ENCODE measurements at regions of chr6 and their contacts with region 1.

Region 1: GRCh38 chr6:28399350-28400121 is at the start of gene ZSCAN12:
- DNase-seq: peak; percentile 79
- ATAC-seq: peak; percentile 89
- H3K4me3 Mint-ChIP-seq: peak within 1 kb of the TSS; percentile 97
- H3K27ac Mint-ChIP-seq: peak within 1 kb of the TSS; percentile 95
- H3K4me1 Mint-ChIP-seq: peaks cover 42% of the 10 kb centered on the region
- H3K27me3 Mint-ChIP-seq: peaks cover 34% of the 10 kb centered on the region
- CTCF ChIP-seq: no peak
- total RNA-seq, gene ZSCAN12: 12.8 and 13.0 TPM in 2 replicates

Region 2: DNA sequence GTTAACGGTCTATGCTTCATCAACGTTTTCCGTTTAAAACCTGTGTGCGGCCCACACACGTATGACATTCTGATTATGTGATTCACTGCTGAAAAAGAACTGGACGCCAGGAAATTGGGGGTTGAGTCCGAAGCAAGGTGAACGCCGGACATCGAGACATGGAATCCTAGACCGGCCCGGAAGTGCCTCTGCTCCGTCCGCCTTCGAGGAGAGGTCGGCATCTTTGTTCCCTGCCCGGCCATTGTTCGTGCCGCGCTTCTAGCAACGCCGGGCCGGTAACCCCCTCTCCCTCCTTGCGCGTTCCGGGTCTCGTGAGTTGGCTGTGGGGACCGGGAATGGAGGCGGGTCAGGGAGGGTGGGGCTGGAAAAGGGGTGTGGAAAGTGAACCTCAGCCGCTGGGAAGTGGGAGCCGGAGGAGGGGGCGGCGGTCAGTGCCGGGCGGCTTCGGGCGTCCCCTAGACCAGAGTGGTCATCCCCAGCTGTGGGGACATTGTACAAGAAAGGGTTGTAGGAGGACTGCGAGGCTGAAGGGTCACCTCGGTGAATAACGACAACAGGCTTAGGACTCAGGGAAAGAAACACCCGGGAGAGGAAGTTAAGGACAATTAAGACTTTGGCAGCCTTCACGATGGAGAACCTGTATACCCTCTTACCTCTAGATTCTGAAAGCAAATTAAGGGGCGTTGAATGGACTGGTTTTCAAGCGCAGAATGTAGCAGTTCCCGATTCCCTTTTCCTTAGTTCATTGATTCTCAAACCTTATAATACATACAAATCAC is 174.3 kb before region 1 on chr6 and contains the start of gene ZSCAN9:
- CTCF ChIA-PET with region 1: no interaction called
- POLR2A ChIA-PET with region 1: no interaction called
- intact Hi-C with region 1: loop called (anchors 2 kb)
- DNase-seq: peak; percentile 52
- ATAC-seq: peak; percentile 89
- H3K4me3 Mint-ChIP-seq: peak within 1 kb of the TSS; percentile 88
- H3K27ac Mint-ChIP-seq: peak within 1 kb of the TSS; percentile 68
- H3K4me1 Mint-ChIP-seq: peaks cover 21% of the 10 kb centered on the region
- H3K27me3 Mint-ChIP-seq: peaks cover 21% of the 10 kb centered on the region
- CTCF ChIP-seq: no peak
- total RNA-seq, gene ZSCAN9: 25.9 and 30.3 TPM in 2 replicates

Region 3: GRCh38 chr6:28335564-28336283 is 63.8 kb before region 1 on chr6 and contains the start of gene ZSCAN31:
- CTCF ChIA-PET with region 1: no interaction called
- POLR2A ChIA-PET with region 1: interaction called, 3 read pairs
- intact Hi-C with region 1: loop called (anchors 5 kb)
- DNase-seq: peak; percentile 61
- ATAC-seq: peak; percentile 93
- H3K4me3 Mint-ChIP-seq: no peak within 1 kb of the TSS
- H3K27ac Mint-ChIP-seq: no peak within 1 kb of the TSS
- H3K4me1 Mint-ChIP-seq: no peaks in the 10 kb centered on the region
- H3K27me3 Mint-ChIP-seq: no peaks in the 10 kb centered on the region
- CTCF ChIP-seq: no peak
- total RNA-seq, gene ZSCAN31: 1.0 and 3.6 TPM in 2 replicates

Region 4: DNA sequence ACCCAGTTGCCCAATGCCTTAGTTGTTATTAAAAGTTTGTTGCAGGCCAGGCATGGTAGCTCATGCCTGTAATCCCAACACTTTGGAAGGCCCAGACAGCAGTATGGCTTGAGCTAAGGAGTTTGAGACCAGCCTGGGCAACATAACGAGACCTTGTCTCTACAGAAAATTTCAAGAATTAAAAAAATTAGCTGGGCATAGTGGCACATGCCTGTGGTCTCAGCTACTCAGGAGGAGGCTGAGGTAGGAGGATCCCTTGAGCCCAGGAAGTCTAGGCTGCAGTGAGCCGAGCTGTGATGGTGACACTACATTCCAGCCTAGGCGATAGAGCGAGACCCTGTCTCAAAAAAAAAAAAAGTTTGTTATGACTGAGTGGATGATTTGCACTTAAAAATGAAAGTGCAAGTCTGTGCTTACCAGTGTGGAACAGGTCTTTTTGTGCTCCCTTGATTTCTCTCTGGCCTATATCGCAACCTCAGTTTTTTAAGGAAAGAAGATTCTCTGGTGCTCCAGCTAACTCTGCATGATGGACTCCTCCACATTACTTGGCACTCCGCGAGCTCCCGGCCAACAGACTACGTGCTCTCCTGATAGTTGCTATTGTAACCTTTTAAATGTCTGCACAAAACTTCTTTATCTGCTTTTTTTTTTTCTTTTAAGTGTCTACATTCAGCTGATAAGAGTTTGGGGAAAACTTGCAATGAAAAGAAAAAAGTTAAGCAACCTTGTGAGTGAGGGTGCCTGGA is 27.7 kb before region 1 on chr6:
- CTCF ChIA-PET with region 1: no interaction called
- POLR2A ChIA-PET with region 1: interaction called, 5 read pairs
- intact Hi-C with region 1: loop called (anchors 1 kb)
- DNase-seq: no peak
- ATAC-seq: peak; percentile 85
- H3K4me3 Mint-ChIP-seq: peak overlapping the region; percentile 41
- H3K27ac Mint-ChIP-seq: peak overlapping the region; percentile 84
- H3K4me1 Mint-ChIP-seq: peaks cover 24% of the 10 kb centered on the region
- H3K27me3 Mint-ChIP-seq: no peaks in the 10 kb centered on the region
- CTCF ChIP-seq: no peak

Region 5: GRCh38 chr6:28443112-28443773 is 43.7 kb after region 1 on chr6 and contains the start of gene ZSCAN23:
- CTCF ChIA-PET with region 1: no interaction called
- POLR2A ChIA-PET with region 1: interaction called, 3 read pairs
- intact Hi-C with region 1: loop called (anchors 1 kb)
- DNase-seq: peak; percentile 31
- ATAC-seq: peak; percentile 71
- H3K4me3 Mint-ChIP-seq: peak within 1 kb of the TSS; percentile 87
- H3K27ac Mint-ChIP-seq: peak within 1 kb of the TSS; percentile 51
- H3K4me1 Mint-ChIP-seq: peaks cover 14% of the 10 kb centered on the region
- H3K27me3 Mint-ChIP-seq: peaks cover 43% of the 10 kb centered on the region
- CTCF ChIP-seq: no peak
- total RNA-seq, gene ZSCAN23: 0.18 and 0.49 TPM in 2 replicates